Ascending aorta (tissue), 2 donors: ENCODE measurements at regions of chr2 and their contacts with region 1.

Region 1: GRCh38 chr2:237998530-237998929 is 31.7 kb downstream of the UBE2F start:
- DNase-seq: no peak
- H3K4me3 ChIP-seq: peak overlapping the region in 1 of 2 donors; percentile 19
- H3K27ac ChIP-seq: peak overlapping the region; percentile 6 to 26
- H3K4me1 ChIP-seq: peaks cover 0 to 22% of the 10 kb centered on the region in 2 donors
- H3K27me3 ChIP-seq: no peaks in the 10 kb centered on the region
- CTCF ChIP-seq: no peak

Region 2: GRCh38 chr2:237361194-237361986 is 637.1 kb before region 1 on chr2:
- intact Hi-C with region 1: no loop called
- DNase-seq: no peak
- H3K4me3 ChIP-seq: no peak overlapping the region
- H3K27ac ChIP-seq: no peak overlapping the region
- H3K4me1 ChIP-seq: no peaks in the 10 kb centered on the region
- H3K27me3 ChIP-seq: no peaks in the 10 kb centered on the region
- CTCF ChIP-seq: no peak

Region 3: GRCh38 chr2:237966565-237967462 is 31.7 kb before region 1 on chr2 and contains the start of gene UBE2F:
- intact Hi-C with region 1: loop called (anchors 2 kb)
- DNase-seq: peak; percentile 84 to 98
- H3K4me3 ChIP-seq: peak within 1 kb of the TSS; percentile 82 to 87
- H3K27ac ChIP-seq: peak within 1 kb of the TSS; percentile 61 to 69
- H3K4me1 ChIP-seq: peaks cover 20 to 31% of the 10 kb centered on the region in 2 donors
- H3K27me3 ChIP-seq: no peaks in the 10 kb centered on the region
- CTCF ChIP-seq: no peak
- total RNA-seq, gene UBE2F: 50.7 TPM

Region 4: GRCh38 chr2:238106686-238107524 is 108.4 kb after region 1 on chr2:
- intact Hi-C with region 1: no loop called
- DNase-seq: peak in 1 of 2 donors; percentile 53
- H3K4me3 ChIP-seq: no peak overlapping the region
- H3K27ac ChIP-seq: no peak overlapping the region
- H3K4me1 ChIP-seq: peaks cover 0 to 2% of the 10 kb centered on the region in 2 donors
- H3K27me3 ChIP-seq: no peaks in the 10 kb centered on the region
- CTCF ChIP-seq: peak in 1 of 3 experiments; percentile 12